PC-3 (cell line): ENCODE measurements at regions of chr1 and their contacts with region 1.

Region 1: DNA sequence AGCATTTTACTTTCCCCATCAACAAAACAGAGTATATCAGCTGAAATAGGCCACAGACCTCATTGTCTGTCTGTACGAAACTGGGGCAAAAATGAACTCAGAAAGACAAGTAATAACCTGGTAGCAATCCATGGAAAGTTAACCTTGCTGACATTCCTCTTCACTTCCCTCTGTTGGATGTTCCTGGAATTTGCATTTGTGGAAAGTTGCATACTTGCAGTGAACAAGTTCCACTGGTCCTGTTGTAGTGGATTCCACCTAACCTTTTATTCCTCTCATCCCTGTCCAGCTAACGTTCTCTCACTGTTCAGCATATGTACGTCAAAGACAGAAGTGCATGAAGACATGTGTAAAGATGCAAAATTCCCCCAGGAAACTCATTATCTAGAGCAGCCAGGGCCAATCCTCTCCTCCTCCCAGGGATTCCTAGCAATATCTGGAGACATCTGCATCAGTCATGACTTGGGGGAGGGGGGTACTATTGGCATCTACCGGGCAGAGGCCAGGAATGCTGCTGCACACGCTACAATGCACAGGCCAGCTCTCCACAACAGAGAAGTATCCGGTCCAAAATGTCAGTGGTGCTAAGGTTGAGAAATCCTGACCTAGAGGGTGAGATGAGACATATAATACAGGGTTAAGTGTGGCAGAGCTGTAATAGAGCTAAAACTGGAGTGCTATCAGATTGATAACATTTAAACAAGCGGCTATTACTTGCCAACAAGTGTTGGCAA is 8.2 kb downstream of the LPAR3 start:
- DNase-seq: peak; percentile 32
- ATAC-seq: no peak
- H3K4me3 ChIP-seq: no peak overlapping the region
- H3K27ac ChIP-seq: no peak overlapping the region
- H3K4me1 ChIP-seq: peaks cover 38% of the 10 kb centered on the region
- H3K27me3 ChIP-seq: no peaks in the 10 kb centered on the region
- CTCF ChIP-seq: peak; percentile 34

Region 2: GRCh38 chr1:84847253-84848250 is 37.3 kb before region 1 on chr1:
- CTCF ChIA-PET with region 1: no interaction called
- POLR2A ChIA-PET with region 1: no interaction called
- intact Hi-C with region 1: loop called (anchors 5 kb)
- DNase-seq: peak; percentile 98
- ATAC-seq: peak; percentile 77
- H3K4me3 ChIP-seq: no peak overlapping the region
- H3K27ac ChIP-seq: peak overlapping the region; percentile 91
- H3K4me1 ChIP-seq: peaks cover 49% of the 10 kb centered on the region
- H3K27me3 ChIP-seq: no peaks in the 10 kb centered on the region
- CTCF ChIP-seq: no peak

Region 3: GRCh38 chr1:85638412-85638811 is 753.6 kb after region 1 on chr1:
- CTCF ChIA-PET with region 1: no interaction called
- POLR2A ChIA-PET with region 1: no interaction called
- intact Hi-C with region 1: no loop called
- DNase-seq: no peak
- ATAC-seq: no peak
- H3K4me3 ChIP-seq: no peak overlapping the region
- H3K27ac ChIP-seq: no peak overlapping the region
- H3K4me1 ChIP-seq: no peaks in the 10 kb centered on the region
- H3K27me3 ChIP-seq: no peaks in the 10 kb centered on the region
- CTCF ChIP-seq: no peak